Activated CD4-positive, alpha-beta memory T cell treated with anti-CD3 and anti-CD28 coated beads for 36 hours (primary cell): ENCODE measurements at regions of chr1 and their contacts with region 1.

Region 1: GRCh38 chr1:172883107-172883791 is 167.5 kb downstream of the TNFSF18 start:
- DNase-seq: peak; percentile 48
- H3K4me3 Mint-ChIP-seq: no peak overlapping the region
- H3K27ac Mint-ChIP-seq: no peak overlapping the region
- H3K4me1 Mint-ChIP-seq: peaks cover 15% of the 10 kb centered on the region
- H3K27me3 Mint-ChIP-seq: peaks cover 33% of the 10 kb centered on the region

Region 2: DNA sequence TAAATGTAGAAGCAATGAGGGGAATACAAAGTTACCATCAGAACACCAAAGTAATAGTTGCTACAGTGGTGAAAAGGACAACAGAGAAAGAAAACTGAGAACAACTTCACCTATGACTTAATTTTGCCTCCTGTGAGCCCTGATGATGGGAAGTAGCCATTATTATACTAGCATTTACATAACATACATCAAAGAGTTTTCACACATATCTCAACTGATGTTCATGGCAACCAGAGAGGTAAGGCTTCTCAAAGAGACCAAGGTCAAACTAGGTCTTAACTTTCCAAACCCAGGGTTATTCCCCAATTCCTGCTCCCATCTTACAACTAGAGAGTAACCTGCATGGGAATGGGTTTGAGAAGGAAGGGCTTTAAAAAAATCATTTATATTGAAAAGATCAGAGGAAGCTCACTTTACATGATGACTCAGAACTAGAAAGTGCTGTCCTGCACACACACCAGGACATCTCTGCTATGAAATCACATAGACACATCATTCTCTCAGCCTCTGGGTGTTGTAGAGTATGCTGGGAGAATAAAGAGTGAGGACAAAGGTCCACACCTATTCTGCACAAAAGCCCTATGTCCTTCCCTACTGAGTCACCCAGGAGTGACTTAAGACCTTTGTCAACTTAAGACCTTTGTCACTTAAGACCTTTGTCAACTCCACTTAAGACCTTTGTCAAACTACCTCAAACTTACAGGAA is 12.2 kb before region 1 on chr1:
- CTCF ChIA-PET with region 1: no interaction called
- POLR2A ChIA-PET with region 1: no interaction called
- intact Hi-C with region 1: loop called (anchors 2 kb)
- DNase-seq: no peak
- H3K4me3 Mint-ChIP-seq: no peak overlapping the region
- H3K27ac Mint-ChIP-seq: no peak overlapping the region
- H3K4me1 Mint-ChIP-seq: peaks cover 37% of the 10 kb centered on the region
- H3K27me3 Mint-ChIP-seq: peaks cover 13% of the 10 kb centered on the region

Region 3: DNA sequence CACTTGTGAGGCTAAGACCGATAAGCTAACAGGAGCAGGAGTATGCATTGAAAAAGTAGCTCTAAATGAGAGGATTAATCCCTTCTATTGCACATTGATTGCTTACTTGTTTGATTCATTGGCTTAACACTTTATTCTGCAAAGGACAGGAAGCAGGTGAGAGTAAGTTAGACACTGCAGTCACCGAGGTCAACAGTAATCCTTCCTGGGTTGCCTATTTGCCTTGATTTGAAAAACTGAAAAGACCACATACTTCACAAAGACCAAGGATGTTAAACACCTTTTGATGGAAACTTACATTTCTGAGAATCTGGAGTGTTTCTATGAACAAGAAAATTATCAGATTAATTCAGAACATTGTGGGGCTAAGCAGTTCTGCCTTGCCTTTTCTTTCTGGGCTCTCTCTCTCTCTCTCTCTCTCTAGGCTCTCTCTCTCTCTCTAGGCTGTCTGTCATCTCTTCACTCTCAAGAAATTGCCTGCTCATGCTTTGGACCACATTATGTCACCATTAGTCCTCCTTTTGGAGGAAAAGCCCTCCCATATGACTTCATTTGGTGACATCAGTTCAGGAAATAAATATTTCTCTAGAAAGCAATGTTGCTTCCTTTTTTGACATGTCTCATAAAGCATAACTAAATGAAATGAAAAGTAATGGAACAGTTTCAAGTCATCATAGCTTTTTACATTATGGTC is 63.7 kb after region 1 on chr1:
- CTCF ChIA-PET with region 1: no interaction called
- POLR2A ChIA-PET with region 1: no interaction called
- intact Hi-C with region 1: no loop called
- DNase-seq: no peak
- H3K4me3 Mint-ChIP-seq: no peak overlapping the region
- H3K27ac Mint-ChIP-seq: no peak overlapping the region
- H3K4me1 Mint-ChIP-seq: peaks cover 15% of the 10 kb centered on the region
- H3K27me3 Mint-ChIP-seq: no peaks in the 10 kb centered on the region

Region 4: GRCh38 chr1:172969611-172970010 is 86.4 kb after region 1 on chr1:
- CTCF ChIA-PET with region 1: no interaction called
- POLR2A ChIA-PET with region 1: no interaction called
- intact Hi-C with region 1: loop called (anchors 5 kb)
- DNase-seq: no peak
- H3K4me3 Mint-ChIP-seq: no peak overlapping the region
- H3K27ac Mint-ChIP-seq: no peak overlapping the region
- H3K4me1 Mint-ChIP-seq: peaks cover 10% of the 10 kb centered on the region
- H3K27me3 Mint-ChIP-seq: peaks cover 6% of the 10 kb centered on the region

Region 5: GRCh38 chr1:173038875-173039554 is 155.8 kb after region 1 on chr1:
- CTCF ChIA-PET with region 1: interaction called, 3 read pairs
- POLR2A ChIA-PET with region 1: no interaction called
- intact Hi-C with region 1: loop called (anchors 5 kb)
- DNase-seq: peak; percentile 25
- H3K4me3 Mint-ChIP-seq: no peak overlapping the region
- H3K27ac Mint-ChIP-seq: no peak overlapping the region
- H3K4me1 Mint-ChIP-seq: peaks cover 11% of the 10 kb centered on the region
- H3K27me3 Mint-ChIP-seq: no peaks in the 10 kb centered on the region

Region 6: GRCh38 chr1:173122958-173123852 is 240.0 kb after region 1 on chr1:
- CTCF ChIA-PET with region 1: no interaction called
- POLR2A ChIA-PET with region 1: no interaction called
- intact Hi-C with region 1: no loop called
- DNase-seq: no peak
- H3K4me3 Mint-ChIP-seq: no peak overlapping the region
- H3K27ac Mint-ChIP-seq: no peak overlapping the region
- H3K4me1 Mint-ChIP-seq: no peaks in the 10 kb centered on the region
- H3K27me3 Mint-ChIP-seq: no peaks in the 10 kb centered on the region